Ascending aorta (tissue), 2 donors: ENCODE measurements at regions of chrX and their contacts with region 1.

Region 1: DNA sequence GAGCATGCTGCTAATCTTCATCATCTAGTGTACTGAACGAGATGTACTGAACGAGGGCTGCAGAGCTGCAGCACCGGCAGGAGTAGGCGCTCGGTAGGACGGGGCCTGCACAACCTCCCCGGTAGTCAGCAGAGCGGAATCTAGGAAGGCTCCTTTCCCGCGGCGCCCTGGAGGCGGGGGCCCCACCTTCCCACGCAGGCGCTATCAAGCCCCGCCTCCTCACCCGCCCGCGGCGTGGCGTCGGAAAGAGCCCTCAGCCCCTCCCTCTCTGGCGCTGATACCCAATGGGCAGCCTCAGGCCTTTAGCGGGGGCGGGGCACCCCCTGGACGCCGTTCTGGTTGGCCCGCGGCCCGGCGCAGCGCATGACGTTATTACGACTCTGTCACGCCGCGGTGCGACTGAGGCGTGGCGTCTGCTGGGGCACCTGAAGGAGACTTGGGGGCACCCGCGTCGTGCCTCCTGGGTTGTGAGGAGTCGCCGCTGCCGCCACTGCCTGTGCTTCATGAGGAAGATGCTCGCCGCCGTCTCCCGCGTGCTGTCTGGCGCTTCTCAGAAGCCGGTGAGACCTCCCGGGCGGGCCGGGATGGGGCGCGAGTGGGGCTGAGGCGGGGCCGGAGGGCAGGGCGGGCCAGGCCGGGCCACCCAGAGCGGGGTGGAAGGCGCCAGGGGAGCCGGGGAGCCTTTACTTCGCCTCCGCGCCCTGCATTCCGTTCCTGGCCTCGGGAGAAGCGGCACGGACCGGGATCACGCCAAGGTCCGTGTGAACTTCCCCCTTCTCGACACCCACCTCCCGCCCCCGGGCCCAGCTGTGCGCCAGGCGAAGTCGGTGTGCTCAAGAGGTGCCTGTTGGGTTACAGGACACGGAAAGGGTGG is at the start of gene PDHA1:
- DNase-seq: peak; percentile 80 to 95
- H3K4me3 ChIP-seq: peak within 1 kb of the TSS; percentile 60 to 89
- H3K27ac ChIP-seq: peak within 1 kb of the TSS; percentile 80 to 90
- H3K4me1 ChIP-seq: peaks cover 0 to 3% of the 10 kb centered on the region in 2 donors
- H3K27me3 ChIP-seq: no peaks in the 10 kb centered on the region
- CTCF ChIP-seq: no peak
- total RNA-seq, gene PDHA1: 30.9 TPM

Region 2: DNA sequence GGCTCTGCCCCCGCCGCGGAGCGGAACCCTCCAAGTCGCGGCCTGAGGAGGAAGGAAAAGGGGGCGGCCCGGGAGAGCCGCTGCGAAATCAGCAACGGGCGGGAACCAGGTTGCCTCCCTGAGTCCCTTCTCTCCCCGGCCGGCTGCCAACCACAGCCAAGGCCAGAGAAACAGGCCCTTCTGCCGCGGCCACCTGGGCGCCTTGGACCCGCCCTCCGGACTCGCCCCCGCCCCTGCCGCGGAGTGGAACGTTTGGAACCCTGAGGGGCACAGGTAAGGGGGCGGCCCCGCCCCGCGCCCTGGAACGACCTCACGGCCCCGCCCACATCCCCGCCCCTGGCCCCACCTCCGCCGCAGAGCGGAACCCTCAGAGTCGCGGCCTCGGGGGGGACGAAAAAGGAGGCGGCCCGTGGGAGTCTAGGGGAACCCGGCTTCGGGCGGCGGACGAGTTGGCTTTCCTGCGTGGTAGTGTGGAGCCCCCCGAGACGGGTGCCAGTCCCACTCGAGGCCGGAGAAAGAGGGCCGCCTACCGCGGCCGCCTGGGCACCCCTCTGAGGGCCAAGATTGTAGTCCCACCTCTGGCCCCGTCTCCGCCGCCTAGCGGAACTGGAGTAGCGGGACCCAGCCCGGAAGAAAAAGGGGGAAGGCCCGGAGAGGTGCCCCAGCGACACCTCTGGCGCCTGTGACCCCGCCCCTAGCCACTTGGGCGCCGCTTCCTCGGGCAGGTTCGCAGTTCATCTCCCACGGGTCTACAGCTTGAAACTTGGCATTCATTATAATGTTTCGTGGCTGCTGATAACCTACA is 359.2 kb before region 1 on chrX:
- intact Hi-C with region 1: loop called (anchors 2 kb)
- DNase-seq: peak; percentile 13 to 85
- H3K4me3 ChIP-seq: peak overlapping the region; percentile 68 to 73
- H3K27ac ChIP-seq: peak overlapping the region; percentile 74 to 85
- H3K4me1 ChIP-seq: no peaks in the 10 kb centered on the region
- H3K27me3 ChIP-seq: no peaks in the 10 kb centered on the region
- CTCF ChIP-seq: peak; percentile 34 to 57 (median 56)

Region 3: DNA sequence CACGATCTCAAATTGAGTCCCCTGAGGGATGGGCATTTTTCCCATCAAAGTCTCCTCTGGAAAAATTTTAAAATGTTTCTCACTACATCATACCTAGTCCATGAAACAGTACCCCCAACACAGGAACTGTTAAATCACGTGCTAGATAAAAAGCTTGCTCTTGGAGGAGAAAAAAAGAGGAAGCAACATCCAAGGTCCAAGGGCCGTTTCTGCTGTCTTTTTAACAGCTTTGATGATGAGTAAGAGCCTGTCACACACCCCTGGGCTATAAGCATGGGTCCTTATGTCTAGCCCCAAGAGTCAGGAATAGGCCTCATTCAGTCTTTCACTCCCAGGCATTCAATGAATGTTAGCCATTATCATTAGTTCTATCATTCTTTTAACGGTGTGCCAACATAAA is 414.8 kb after region 1 on chrX:
- intact Hi-C with region 1: no loop called
- DNase-seq: no peak
- H3K4me3 ChIP-seq: no peak overlapping the region
- H3K27ac ChIP-seq: no peak overlapping the region
- H3K4me1 ChIP-seq: no peaks in the 10 kb centered on the region
- H3K27me3 ChIP-seq: no peaks in the 10 kb centered on the region
- CTCF ChIP-seq: no peak